Posterior vena cava (tissue), 2 donors: ENCODE measurements at regions of chrX and their contacts with region 1.

Region 1: DNA sequence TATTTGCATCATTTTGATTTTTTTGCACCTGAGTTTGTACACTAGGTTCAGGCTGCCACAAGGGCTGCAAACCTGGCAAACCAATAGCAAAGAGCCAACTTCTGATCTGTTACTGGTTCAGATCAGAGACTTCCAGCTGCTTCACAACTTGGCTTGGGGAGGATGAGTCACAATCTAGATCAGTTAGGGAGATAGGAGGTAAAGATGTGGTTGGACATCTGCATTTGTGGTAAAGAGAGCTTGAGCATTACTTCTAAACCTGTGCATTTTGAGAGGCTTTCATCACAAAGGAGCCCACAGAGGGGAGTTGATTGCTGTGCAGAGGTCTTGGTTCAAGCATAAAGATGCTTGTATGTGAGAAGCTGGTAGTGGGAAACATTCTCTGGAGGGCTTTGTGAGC is 34.5 kb downstream of the LINC00632 start:
- DNase-seq: no peak

Region 2: GRCh38 chrX:140775211-140775610 is 31.1 kb after region 1 on chrX:
- intact Hi-C with region 1: loop called in 1 of 2 experiments (anchors 2 kb)
- DNase-seq: no peak

Region 3: DNA sequence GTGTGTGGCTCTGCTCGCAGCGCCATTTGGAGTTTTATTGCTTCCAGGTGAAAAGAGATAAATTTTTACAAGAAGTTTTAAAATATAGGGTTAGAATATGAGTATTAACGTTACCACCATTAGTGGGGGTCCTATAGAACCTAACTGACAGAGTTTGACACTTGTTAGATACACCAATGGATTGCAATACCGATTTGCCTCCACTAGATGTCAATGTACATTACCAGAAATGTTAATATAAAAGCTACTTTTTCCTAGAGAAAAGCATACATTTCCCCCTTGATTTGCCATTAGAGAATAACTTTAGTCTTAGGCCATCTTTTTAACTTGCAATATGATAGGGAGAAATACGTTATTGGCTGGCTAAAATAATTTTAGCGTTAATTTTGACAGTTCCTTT is 73.9 kb after region 1 on chrX:
- intact Hi-C with region 1: no loop called
- DNase-seq: no peak